HepG2 (cell line): ENCODE measurements at regions of chr4 and their contacts with region 1.

Region 1: GRCh38 chr4:15396157-15396800 is 31.6 kb upstream of the C1QTNF7 start:
- DNase-seq: peak; percentile 33
- ATAC-seq: peak; percentile 91
- H3K4me3 ChIP-seq: no peak overlapping the region
- H3K27ac ChIP-seq: no peak overlapping the region
- H3K4me1 ChIP-seq: no peaks in the 10 kb centered on the region
- H3K27me3 ChIP-seq: no peaks in the 10 kb centered on the region; a peak in 1 of 5 replicates
- CTCF ChIP-seq: peak; percentile 79
- EP300 ChIP-seq: no peak
- POLR2A ChIP-seq: no peak
- RAD21 ChIP-seq: peak; percentile 34; the same call in 1 of the 2 replicates

Region 2: DNA sequence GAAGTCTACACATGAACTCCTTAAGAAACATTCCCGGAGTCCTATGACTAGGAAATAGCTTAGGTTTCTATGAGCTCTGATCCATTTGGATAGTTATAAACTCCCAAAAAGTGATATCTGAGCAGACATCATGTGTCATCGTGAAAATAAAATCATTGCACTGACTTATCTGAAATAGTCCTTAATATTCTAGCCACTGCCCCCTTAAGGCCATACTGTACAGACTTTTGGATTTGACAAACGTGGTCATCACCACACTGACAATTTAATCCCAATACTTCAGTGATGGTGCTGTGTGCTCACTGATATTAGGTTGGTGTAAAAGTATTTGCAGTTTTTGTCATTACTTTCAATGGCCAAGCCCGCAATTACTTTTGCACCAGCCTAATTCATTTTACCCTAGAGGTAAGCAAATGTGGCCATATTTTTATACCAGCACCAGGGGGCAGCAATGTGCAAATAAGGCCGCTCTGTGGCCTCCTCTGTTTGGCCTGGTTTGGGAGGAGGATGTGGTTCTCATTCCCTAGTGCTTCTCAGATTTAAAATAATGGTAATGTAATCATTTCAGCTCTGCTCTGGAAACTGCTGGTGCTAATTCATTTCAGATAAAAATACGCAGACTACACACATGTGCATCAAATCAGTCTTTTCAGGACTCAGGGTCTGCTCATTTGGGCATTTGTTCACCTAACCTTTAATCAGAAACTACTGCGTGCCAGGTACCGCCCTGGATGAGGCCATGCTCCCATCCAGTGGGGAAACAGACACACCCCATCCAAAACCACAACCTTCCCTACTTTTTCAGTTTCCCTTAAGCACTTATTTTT is 164.8 kb before region 1 on chr4:
- CTCF ChIA-PET with region 1: interaction called, 13 read pairs
- POLR2A ChIA-PET with region 1: no interaction called
- in situ Hi-C with region 1: loop called (anchors 5 kb)
- intact Hi-C with region 1: loop called (anchors 2 kb)
- DNase-seq: peak; percentile 68
- ATAC-seq: peak; percentile 96
- H3K4me3 ChIP-seq: no peak overlapping the region
- H3K27ac ChIP-seq: no peak overlapping the region
- H3K4me1 ChIP-seq: peaks cover 11% of the 10 kb centered on the region; the same call in 1 of the 2 replicates
- H3K27me3 ChIP-seq: no peaks in the 10 kb centered on the region
- CTCF ChIP-seq: peak; percentile 72
- EP300 ChIP-seq: no peak
- POLR2A ChIP-seq: no peak
- RAD21 ChIP-seq: peak; percentile 39; the same call in 1 of the 2 replicates

Region 3: DNA sequence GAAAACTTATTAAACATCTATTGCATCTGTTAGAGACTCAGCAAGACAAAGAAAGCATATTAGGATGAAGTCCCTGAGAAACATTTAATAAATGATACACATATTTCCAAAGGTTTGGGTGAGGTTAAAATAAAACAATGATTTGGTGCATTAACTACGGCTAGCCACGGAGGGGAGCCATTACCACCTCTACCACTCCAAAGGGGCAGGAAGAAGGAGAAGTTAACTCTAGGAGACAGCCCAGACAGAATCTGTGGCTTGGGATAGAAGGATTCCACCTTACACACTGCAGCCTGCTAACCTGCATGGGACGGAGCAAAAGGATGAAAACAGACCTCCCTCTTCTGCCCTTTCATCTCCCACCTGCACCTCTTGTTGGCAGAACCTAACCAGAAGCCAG is 157.6 kb before region 1 on chr4:
- CTCF ChIA-PET with region 1: interaction called, 17 read pairs
- POLR2A ChIA-PET with region 1: no interaction called
- in situ Hi-C with region 1: loop called (anchors 5 kb)
- intact Hi-C with region 1: loop called (anchors 1 kb)
- DNase-seq: peak; percentile 5
- ATAC-seq: peak; percentile 86
- H3K4me3 ChIP-seq: no peak overlapping the region
- H3K27ac ChIP-seq: no peak overlapping the region
- H3K4me1 ChIP-seq: no peaks in the 10 kb centered on the region
- H3K27me3 ChIP-seq: no peaks in the 10 kb centered on the region
- CTCF ChIP-seq: peak; percentile 61
- EP300 ChIP-seq: no peak
- POLR2A ChIP-seq: no peak
- RAD21 ChIP-seq: peak; percentile 44; the same call in 1 of the 2 replicates

Region 4: GRCh38 chr4:15344041-15344440 is 52.2 kb before region 1 on chr4:
- CTCF ChIA-PET with region 1: no interaction called
- POLR2A ChIA-PET with region 1: no interaction called
- in situ Hi-C with region 1: no loop called
- intact Hi-C with region 1: no loop called
- DNase-seq: no peak
- ATAC-seq: no peak
- H3K4me3 ChIP-seq: no peak overlapping the region
- H3K27ac ChIP-seq: no peak overlapping the region
- H3K4me1 ChIP-seq: peaks cover 9% of the 10 kb centered on the region; the same call in 1 of the 2 replicates
- H3K27me3 ChIP-seq: peaks cover 0 to 4% of the 10 kb centered on the region in 2 experiments; a peak in 3 of 5 replicates
- CTCF ChIP-seq: no peak
- EP300 ChIP-seq: no peak
- POLR2A ChIP-seq: no peak
- RAD21 ChIP-seq: no peak